CD4-positive, alpha-beta memory T cell (primary cell): ENCODE measurements at regions of chr13 and their contacts with region 1.

Region 1: GRCh38 chr13:100514788-100515409 is 73.7 kb downstream of the GGACT start:
- DNase-seq: peak; percentile 63 to 71 (median 67)
- H3K4me3 ChIP-seq: no peak overlapping the region
- H3K4me3 Mint-ChIP-seq: no peak overlapping the region
- H3K27ac ChIP-seq: no peak overlapping the region
- H3K27ac Mint-ChIP-seq: no peak overlapping the region
- H3K4me1 ChIP-seq: peaks cover 20% of the 10 kb centered on the region
- H3K4me1 Mint-ChIP-seq: peaks cover 9 to 21% (median 18%) of the 10 kb centered on the region in 4 donors
- H3K27me3 ChIP-seq: no peaks in the 10 kb centered on the region
- H3K27me3 Mint-ChIP-seq: no peaks in the 10 kb centered on the region

Region 2: GRCh38 chr13:99442273-99442895 is 1072.5 kb before region 1 on chr13:
- CTCF ChIA-PET with region 1: interaction called, 10 read pairs
- POLR2A ChIA-PET with region 1: no interaction called
- intact Hi-C with region 1: loop called (anchors 1 kb)
- DNase-seq: peak; percentile 66 to 74 (median 71)
- H3K4me3 ChIP-seq: no peak overlapping the region
- H3K4me3 Mint-ChIP-seq: no peak overlapping the region
- H3K27ac ChIP-seq: no peak overlapping the region
- H3K27ac Mint-ChIP-seq: peak overlapping the region in 1 of 7 donors; percentile 9
- H3K4me1 ChIP-seq: peaks cover 3% of the 10 kb centered on the region
- H3K4me1 Mint-ChIP-seq: peaks cover 4 to 10% (median 6%) of the 10 kb centered on the region in 4 donors
- H3K27me3 ChIP-seq: no peaks in the 10 kb centered on the region
- H3K27me3 Mint-ChIP-seq: peaks cover 1 to 3% of the 10 kb centered on the region in 2 donors

Region 3: DNA sequence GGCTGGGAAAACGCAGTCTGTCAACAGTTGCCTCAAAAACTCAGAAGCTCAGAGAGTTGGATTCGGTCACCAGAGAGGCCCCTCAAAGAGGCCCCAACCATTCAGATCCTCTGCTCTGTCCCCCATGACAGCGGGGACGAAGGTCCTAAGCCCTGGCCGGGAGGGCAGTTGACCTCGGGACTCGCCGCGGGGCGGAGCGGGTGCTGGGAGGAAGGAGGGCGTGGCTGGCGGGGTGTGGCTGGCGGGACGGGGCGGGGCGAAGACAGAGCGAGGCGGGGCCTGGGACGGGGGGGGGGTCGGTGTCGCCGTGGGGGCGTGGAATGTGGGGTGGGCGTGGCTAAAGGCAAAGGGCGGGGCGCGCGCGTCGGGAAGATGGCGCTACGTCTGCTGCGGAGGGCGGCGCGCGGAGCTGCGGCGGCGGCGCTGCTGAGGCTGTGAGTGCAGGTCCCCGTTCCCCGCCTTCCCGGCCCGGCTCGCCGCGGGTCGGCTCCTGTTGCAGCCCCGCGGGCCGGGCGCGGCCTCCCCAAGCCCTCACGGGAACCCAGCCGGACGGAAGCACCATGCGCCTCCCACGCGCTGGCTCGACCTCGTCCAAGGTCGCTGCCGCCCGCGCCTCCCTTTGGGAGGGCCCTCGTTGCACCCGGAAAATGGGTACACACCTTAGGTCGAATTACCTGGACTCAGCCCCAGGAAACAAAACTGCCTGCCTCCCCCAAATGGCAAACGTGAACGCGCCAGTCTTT is 908.4 kb before region 1 on chr13:
- CTCF ChIA-PET with region 1: interaction called, 5 read pairs
- POLR2A ChIA-PET with region 1: no interaction called
- intact Hi-C with region 1: loop called (anchors 5 kb)
- DNase-seq: peak; percentile 87 to 90 (median 89)
- H3K4me3 ChIP-seq: peak within 1 kb of the TSS; percentile 53 to 78
- H3K4me3 Mint-ChIP-seq: peak within 1 kb of the TSS; percentile 88 to 97 (median 90)
- H3K27ac ChIP-seq: peak within 1 kb of the TSS; percentile 71
- H3K27ac Mint-ChIP-seq: peak within 1 kb of the TSS; percentile 91 to 96 (median 95)
- H3K4me1 ChIP-seq: peaks cover 35% of the 10 kb centered on the region
- H3K4me1 Mint-ChIP-seq: peaks cover 28 to 59% (median 46%) of the 10 kb centered on the region in 4 donors
- H3K27me3 ChIP-seq: no peaks in the 10 kb centered on the region
- H3K27me3 Mint-ChIP-seq: no peaks in the 10 kb centered on the region

Region 4: DNA sequence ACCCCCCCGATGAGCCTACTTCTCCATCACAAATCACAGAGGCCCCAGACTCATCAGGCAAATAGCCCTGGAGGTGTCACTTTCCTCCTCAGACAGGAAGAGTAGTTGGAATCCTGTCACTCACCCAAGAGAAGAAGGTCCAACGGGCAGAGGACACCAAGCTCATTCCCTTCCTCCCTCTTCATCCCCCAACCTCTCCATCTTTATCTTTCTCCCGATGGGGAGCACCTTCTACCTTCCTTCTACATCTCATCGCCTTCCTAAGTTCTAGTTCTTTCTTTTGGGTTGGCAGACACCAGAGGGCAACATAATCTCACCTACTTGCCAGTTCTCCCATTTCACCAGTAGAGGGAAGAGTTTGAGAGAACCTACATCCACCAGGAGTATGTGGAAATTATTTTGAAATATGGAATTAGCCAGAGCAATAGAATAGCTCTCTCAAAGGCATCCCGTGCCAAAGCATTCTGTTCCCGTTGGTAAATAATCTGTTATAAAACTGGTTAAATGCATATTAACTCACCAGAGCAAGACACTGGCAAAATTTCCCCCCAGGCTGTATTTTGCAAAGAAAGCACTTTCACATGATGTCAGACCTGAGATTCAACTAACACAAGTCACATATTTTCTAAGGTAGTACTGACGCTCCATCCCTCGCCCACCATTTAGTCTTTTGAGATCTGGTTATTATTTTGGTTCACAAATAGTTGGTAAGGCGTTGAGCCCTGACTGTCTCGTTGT is 598.4 kb before region 1 on chr13:
- CTCF ChIA-PET with region 1: interaction called, 78 read pairs
- POLR2A ChIA-PET with region 1: no interaction called
- intact Hi-C with region 1: loop called (anchors 1 kb)
- DNase-seq: peak; percentile 45 to 52 (median 49)
- H3K4me3 ChIP-seq: no peak overlapping the region
- H3K4me3 Mint-ChIP-seq: no peak overlapping the region
- H3K27ac ChIP-seq: no peak overlapping the region
- H3K27ac Mint-ChIP-seq: no peak overlapping the region
- H3K4me1 ChIP-seq: peaks cover 24% of the 10 kb centered on the region
- H3K4me1 Mint-ChIP-seq: peaks cover 12 to 21% (median 18%) of the 10 kb centered on the region in 4 donors
- H3K27me3 ChIP-seq: no peaks in the 10 kb centered on the region
- H3K27me3 Mint-ChIP-seq: peaks cover 0 to 2% of the 10 kb centered on the region in 2 donors

Region 5: GRCh38 chr13:100235311-100235901 is 279.5 kb before region 1 on chr13:
- CTCF ChIA-PET with region 1: interaction called, 17 read pairs
- POLR2A ChIA-PET with region 1: no interaction called
- intact Hi-C with region 1: loop called (anchors 1 kb)
- DNase-seq: peak in 4 of 5 donors; percentile 37 to 52 (median 44)
- H3K4me3 ChIP-seq: no peak overlapping the region
- H3K4me3 Mint-ChIP-seq: peak overlapping the region in 2 of 8 donors; percentile 13 to 70
- H3K27ac ChIP-seq: no peak overlapping the region
- H3K27ac Mint-ChIP-seq: no peak overlapping the region
- H3K4me1 ChIP-seq: peaks cover 6% of the 10 kb centered on the region
- H3K4me1 Mint-ChIP-seq: peaks cover 4 to 5% (median 4%) of the 10 kb centered on the region in 4 donors
- H3K27me3 ChIP-seq: no peaks in the 10 kb centered on the region
- H3K27me3 Mint-ChIP-seq: peaks cover 0 to 1% of the 10 kb centered on the region in 2 donors

Region 6: DNA sequence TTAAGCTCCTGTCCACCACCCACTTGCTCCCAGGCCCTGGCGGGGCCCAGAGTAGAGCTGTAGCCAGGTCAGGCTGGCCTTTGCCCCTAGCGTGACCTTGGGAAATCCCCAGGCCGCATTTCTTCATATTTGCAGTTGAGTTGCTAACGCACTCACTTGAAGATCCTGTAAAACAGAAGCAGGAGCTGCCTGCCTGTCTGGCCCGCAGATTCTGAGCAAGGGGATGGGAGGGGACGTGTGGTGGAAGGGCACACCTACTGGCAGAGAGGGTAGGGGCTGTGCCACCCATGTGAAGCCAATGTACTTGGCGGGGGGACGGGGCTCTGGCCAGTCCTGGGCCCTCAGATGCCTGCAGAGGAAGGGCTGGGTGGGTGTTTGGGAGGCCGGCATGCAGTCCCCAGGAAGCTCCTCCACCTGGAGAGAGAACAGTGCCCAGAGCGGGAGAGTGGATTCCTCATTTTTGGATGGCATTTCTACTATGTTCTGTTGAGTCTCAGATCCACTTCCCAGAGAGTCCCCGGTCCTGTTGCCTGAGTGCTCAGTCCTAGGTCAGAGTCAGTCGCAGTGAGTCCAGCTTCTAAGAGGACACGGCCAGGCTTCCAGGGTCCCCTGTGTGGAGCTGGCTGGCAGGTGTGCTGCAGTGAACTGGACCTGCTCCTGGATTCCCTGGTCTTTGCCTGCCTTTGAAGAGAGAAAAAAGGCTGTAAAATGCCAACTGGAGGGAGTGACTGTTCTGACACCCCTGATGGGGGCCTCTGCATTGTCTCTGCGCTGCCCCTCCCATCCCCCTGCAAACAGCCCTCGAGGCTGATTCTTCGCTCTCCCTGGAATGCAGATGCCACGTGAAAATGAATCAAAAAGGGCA is 10.8 kb after region 1 on chr13:
- CTCF ChIA-PET with region 1: interaction called, 12 read pairs
- POLR2A ChIA-PET with region 1: no interaction called
- intact Hi-C with region 1: no loop called
- DNase-seq: no peak
- H3K4me3 ChIP-seq: no peak overlapping the region
- H3K4me3 Mint-ChIP-seq: no peak overlapping the region
- H3K27ac ChIP-seq: no peak overlapping the region
- H3K27ac Mint-ChIP-seq: peak overlapping the region in 1 of 7 donors; percentile 43
- H3K4me1 ChIP-seq: peaks cover 15% of the 10 kb centered on the region
- H3K4me1 Mint-ChIP-seq: peaks cover 5 to 24% (median 8%) of the 10 kb centered on the region in 4 donors
- H3K27me3 ChIP-seq: no peaks in the 10 kb centered on the region
- H3K27me3 Mint-ChIP-seq: no peaks in the 10 kb centered on the region